ENCODE measurements at regions of chr12 and their contacts with region 1.

Region 1: GRCh38 chr12:25583545-25583944 is 30.5 kb upstream of the LMNTD1 start:
- DNase-seq: peak; percentile 58
- H3K4me3 Mint-ChIP-seq: no peak overlapping the region
- H3K27ac Mint-ChIP-seq: peak overlapping the region; percentile 2
- H3K4me1 Mint-ChIP-seq: peaks cover 27% of the 10 kb centered on the region
- H3K27me3 Mint-ChIP-seq: no peaks in the 10 kb centered on the region
- CTCF ChIP-seq: peak; percentile 22

Region 2: DNA sequence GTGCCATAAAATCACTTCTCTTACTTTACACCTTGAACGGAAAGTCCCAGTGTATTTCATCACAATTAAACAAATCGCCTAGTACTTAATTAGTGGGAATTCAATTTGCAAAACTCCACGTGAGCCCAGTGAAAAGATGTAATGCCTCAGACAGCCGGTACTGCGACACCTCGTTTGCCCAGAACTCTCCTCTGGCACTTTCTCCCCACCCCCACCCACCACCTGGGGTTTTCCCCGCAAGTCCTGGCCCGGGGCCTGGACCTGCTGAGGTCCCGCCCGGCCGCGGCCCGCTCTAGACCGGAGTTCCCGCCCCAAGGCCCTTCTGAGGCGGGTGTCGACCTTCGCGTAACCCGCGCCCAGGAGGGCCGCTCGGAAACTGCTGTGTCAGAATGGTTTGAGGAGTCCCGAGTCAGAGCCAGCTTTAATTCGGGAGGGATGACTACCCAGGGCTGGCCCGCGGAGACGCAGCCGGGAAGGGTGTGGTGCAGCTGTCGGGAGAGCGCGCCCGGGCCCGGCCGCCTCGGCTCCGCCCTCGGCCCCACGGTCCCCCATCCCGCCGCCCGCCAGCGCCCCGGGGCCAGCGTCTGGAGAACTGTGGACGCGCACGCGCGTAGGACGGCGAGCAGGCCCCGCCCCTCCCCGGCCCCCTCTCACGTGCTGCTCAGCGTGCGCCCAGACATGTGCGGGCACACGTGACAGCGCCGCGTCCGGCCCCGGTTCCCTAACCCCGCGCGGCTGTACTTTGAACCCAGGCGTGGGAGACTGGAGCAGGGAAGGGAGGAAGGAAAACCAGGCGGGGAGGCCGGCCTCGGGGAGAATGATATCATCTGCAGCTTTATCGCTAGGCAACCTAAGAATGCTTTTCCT is 530.5 kb after region 1 on chr12:
- CTCF ChIA-PET with region 1: no interaction called
- POLR2A ChIA-PET with region 1: no interaction called
- intact Hi-C with region 1: loop called (anchors 5 kb)
- DNase-seq: peak; percentile 84
- H3K4me3 Mint-ChIP-seq: peak overlapping the region; percentile 72
- H3K27ac Mint-ChIP-seq: peak overlapping the region; percentile 89
- H3K4me1 Mint-ChIP-seq: peaks cover 22% of the 10 kb centered on the region
- H3K27me3 Mint-ChIP-seq: no peaks in the 10 kb centered on the region
- CTCF ChIP-seq: no peak